ENCODE measurements at regions of chr16 and their contacts with region 1.

Region 1: GRCh38 chr16:4693296-4693955 is at the start of gene NUDT16L1:
- DNase-seq: peak; percentile 97
- ATAC-seq: peak; percentile 95
- H3K4me3 ChIP-seq: peak within 1 kb of the TSS; percentile 50 to 85 (median 81)
- H3K4me3 Mint-ChIP-seq: peak within 1 kb of the TSS; percentile 91
- H3K27ac ChIP-seq: peak within 1 kb of the TSS; percentile 34 to 87
- H3K27ac Mint-ChIP-seq: peak within 1 kb of the TSS; percentile 90
- H3K4me1 ChIP-seq: peaks cover 15 to 19% of the 10 kb centered on the region in 2 donors
- H3K4me1 Mint-ChIP-seq: peaks cover 22% of the 10 kb centered on the region
- H3K27me3 ChIP-seq: no peaks in the 10 kb centered on the region
- H3K27me3 Mint-ChIP-seq: no peaks in the 10 kb centered on the region
- CTCF ChIP-seq: no peak
- total RNA-seq, gene NUDT16L1: 38.5 and 43.2 TPM in 2 replicates

Region 2: GRCh38 chr16:4734063-4734729 is 40.8 kb after region 1 on chr16 and contains the starts of genes ANKS3 and DNAAF8:
- CTCF ChIA-PET with region 1: no interaction called
- POLR2A ChIA-PET with region 1: interaction called, 17 read pairs
- intact Hi-C with region 1: no loop called
- DNase-seq: peak; percentile 89
- ATAC-seq: peak; percentile 80
- H3K4me3 ChIP-seq: peak within 1 kb of the TSS; percentile 79 to 98 (median 91)
- H3K4me3 Mint-ChIP-seq: peak within 1 kb of the TSS; percentile 90
- H3K27ac ChIP-seq: peak within 1 kb of the TSS; percentile 35 to 89
- H3K27ac Mint-ChIP-seq: peak within 1 kb of the TSS; percentile 89
- H3K4me1 ChIP-seq: peaks cover 10 to 13% of the 10 kb centered on the region in 2 donors
- H3K4me1 Mint-ChIP-seq: peaks cover 17% of the 10 kb centered on the region
- H3K27me3 ChIP-seq: no peaks in the 10 kb centered on the region
- H3K27me3 Mint-ChIP-seq: no peaks in the 10 kb centered on the region
- CTCF ChIP-seq: no peak
- total RNA-seq, gene ANKS3: 31.9 and 36.2 TPM in 2 replicates
- total RNA-seq, gene DNAAF8: 0.19 and 0.44 TPM in 2 replicates

Region 3: DNA sequence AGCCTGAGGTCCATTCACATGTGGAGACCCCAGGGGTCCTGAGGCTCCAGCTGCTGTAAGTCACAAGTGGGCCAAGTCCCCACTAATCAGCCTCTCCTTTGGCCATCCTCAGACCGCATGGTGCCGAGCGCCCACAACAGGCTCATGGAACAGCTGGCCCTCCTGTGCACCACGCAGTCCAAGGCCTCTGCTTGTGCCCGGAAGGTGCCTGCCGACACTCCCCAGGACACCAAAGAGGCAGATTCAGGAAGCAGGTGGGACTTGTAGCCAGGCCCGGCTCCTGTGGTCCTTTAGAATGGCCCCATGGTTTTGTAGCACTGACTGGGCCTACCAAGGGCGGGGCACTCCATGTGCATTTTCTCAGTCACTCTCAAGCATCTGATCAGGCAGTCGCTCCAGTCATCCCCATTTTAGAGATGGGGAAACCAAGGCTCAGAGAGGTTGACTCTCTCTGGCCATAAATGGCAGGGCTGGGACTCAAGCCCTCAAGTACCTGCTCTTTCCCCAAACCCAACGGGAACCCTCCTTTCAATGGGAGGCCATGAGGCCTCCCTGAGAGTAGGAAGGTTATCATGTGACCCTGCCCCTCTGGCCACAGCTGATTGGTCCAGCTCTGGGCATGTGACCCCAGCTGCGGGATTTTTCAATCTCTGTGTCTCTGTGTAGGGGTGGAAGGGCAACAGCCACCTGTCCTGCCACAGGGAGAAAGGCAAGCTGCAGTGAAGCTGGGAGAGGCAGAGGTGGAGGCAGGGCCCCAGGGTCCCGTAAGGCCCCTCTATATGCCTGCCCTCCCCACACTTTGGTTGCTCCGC is 51.5 kb after region 1 on chr16:
- CTCF ChIA-PET with region 1: no interaction called
- POLR2A ChIA-PET with region 1: no interaction called
- intact Hi-C with region 1: no loop called
- DNase-seq: no peak
- ATAC-seq: no peak
- H3K4me3 ChIP-seq: no peak overlapping the region
- H3K4me3 Mint-ChIP-seq: no peak overlapping the region
- H3K27ac ChIP-seq: no peak overlapping the region
- H3K27ac Mint-ChIP-seq: no peak overlapping the region
- H3K4me1 ChIP-seq: peaks cover 0 to 23% of the 10 kb centered on the region in 2 donors
- H3K4me1 Mint-ChIP-seq: peaks cover 29% of the 10 kb centered on the region
- H3K27me3 ChIP-seq: peaks cover 0 to 5% (median 2%) of the 10 kb centered on the region in 4 experiments
- H3K27me3 Mint-ChIP-seq: peaks cover 4% of the 10 kb centered on the region
- CTCF ChIP-seq: no peak

Region 4: DNA sequence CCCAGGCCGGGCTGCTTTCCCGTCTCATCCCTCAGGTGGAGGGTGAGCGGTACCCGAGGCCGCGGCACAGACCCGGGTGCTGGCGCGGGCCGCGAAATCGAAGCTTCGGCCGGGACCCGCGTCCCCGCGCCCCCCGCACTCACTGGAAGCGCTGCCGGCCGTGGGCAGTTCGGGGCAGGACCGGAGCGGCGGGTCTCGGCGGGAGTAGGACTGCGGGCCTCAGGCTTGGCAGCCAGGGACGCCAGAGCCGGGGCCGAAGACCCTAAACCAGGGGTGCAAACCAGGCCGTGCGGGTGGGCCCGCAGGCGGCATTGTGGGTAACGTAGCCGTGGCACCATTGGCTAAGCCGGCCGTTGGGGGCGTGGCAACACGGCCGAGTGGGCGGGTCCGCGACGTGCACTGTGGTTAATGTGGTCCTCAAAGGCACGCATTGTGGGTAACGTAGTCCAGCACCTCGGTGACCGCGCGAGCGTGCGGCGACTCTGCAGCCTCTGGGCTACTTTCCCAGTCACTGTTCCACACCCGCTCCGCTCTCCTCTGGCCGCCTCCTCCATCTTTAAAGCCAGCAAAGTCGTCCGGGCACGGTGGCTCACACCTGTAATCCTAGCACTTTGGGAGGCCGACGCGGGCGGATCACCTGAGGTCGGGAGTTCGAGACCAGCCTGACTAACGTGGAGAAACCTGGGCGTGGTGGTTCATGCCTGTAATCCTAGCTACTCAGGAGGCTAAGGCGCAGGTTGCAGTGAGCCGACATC is 73.6 kb after region 1 on chr16 and contains the start of gene ZNF500:
- CTCF ChIA-PET with region 1: no interaction called
- POLR2A ChIA-PET with region 1: interaction called, 5 read pairs
- intact Hi-C with region 1: loop called (anchors 1 kb)
- DNase-seq: peak; percentile 95
- ATAC-seq: peak; percentile 91
- H3K4me3 ChIP-seq: peak within 1 kb of the TSS; percentile 69 to 94 (median 87)
- H3K4me3 Mint-ChIP-seq: peak within 1 kb of the TSS; percentile 98
- H3K27ac ChIP-seq: peak within 1 kb of the TSS in 1 of 2 donors; percentile 80
- H3K27ac Mint-ChIP-seq: peak within 1 kb of the TSS; percentile 95
- H3K4me1 ChIP-seq: peaks cover 15 to 33% of the 10 kb centered on the region in 2 donors
- H3K4me1 Mint-ChIP-seq: peaks cover 31% of the 10 kb centered on the region
- H3K27me3 ChIP-seq: no peaks in the 10 kb centered on the region
- H3K27me3 Mint-ChIP-seq: no peaks in the 10 kb centered on the region
- CTCF ChIP-seq: no peak
- total RNA-seq, gene ZNF500: 26.5 and 35.7 TPM in 2 replicates

Measured in B cell (primary cell).